ENCODE measurements at regions of chr12 and their contacts with region 1.

Region 1: DNA sequence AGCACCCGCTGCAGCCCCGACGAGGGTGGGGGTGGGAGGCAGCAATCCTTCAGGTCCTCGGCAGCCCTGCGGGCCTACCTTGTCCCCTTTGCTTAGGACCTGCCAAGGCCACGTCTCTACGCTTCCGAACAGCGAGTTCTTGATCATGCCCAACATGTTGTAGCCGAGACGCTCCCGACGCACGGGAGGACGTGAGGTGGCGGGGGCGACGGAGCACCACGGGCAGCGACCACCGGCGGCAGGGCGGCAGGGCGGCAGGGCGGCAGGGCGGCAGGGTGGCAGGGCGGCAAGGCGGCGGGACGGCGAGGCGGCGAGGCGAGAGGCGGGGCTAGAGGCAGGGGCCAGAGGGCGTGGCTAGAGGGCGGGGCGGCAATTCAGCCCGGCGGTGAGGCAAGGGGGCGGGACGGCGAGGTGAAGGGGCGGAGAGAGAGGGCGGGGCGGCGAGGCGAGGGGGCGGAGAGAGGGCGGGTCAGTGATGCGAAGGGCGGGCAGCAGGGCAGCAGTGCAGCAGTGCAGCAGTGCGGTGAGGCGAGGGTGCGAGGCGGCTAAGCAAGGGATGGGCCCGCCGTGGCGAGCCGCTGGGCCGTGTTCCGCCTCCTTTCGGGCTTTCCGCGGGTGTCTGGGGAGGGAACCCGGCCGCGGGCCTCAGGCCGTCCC is at the start of gene HEBP1:
- DNase-seq: peak; percentile 96 to 99 (median 98)
- ATAC-seq: peak; percentile 98 to 99 (median 98)
- H3K4me3 ChIP-seq: peak within 1 kb of the TSS; percentile 65 to 94 (median 87)
- H3K27ac ChIP-seq: peak within 1 kb of the TSS; percentile 28 to 98 (median 90)
- H3K4me1 ChIP-seq: peaks cover 0 to 64% (median 19%) of the 10 kb centered on the region in 12 donors
- H3K27me3 ChIP-seq: no peaks in the 10 kb centered on the region
- CTCF ChIP-seq: no peak
- POLR2A ChIP-seq: peak in 1 of 2 donors; percentile 94
- total RNA-seq, gene HEBP1: 26.3 to 65.3 (median 52.6) TPM

Region 2: DNA sequence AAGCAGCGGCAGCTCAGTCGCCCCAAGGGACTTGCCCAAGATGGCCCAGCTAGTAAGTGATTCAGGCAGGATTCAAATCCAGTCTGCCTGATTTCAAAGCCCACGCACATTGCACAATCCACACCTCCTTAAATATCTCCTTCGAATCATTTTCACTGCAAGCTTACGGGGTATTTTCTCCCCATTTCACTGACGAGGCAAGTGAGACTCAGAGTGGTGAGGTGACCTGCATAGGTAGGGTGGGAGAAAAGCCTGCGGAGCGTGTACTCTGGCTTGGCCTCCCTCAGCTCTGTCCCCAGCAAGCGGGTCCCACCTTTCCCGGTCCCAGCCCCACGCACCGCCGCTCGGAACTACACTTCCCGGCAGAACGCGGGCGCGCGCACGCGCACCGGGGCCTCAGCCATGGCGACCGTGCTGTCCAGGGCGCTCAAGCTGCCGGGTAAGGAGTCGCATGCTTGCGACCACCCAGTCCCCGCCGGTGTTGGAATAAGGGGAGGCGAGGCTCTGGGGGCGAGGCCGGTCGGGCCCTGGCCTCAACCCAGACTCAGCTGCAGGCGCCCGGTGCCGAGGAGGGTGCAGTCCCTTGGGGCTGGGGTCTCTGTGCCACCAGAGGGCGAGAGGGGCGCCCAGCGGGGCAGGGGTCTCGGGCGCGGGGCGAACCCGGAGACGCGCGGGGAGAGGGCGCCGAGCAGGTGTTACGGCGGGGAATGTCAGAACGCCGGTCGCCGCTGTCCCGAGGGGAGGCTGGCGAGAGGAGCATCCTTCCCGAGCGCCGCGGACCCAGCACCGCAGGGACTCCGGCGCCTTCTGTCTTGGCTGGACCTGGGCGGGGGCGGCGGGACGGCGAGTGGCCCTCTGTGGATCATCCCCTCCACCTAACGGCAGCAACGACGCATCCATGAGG is 44.2 kb after region 1 on chr12 and contains the start of gene FAM234B:
- intact Hi-C with region 1: loop called in 2 of 10 experiments (anchors 5 kb)
- DNase-seq: peak; percentile 80 to 92 (median 85)
- ATAC-seq: peak; percentile 86 to 99 (median 98)
- H3K4me3 ChIP-seq: peak within 1 kb of the TSS; percentile 87 to 100 (median 96)
- H3K27ac ChIP-seq: peak within 1 kb of the TSS in 10 of 12 donors; percentile 22 to 83 (median 68)
- H3K4me1 ChIP-seq: peaks cover 0 to 22% (median 8%) of the 10 kb centered on the region in 12 donors
- H3K27me3 ChIP-seq: no peaks in the 10 kb centered on the region
- CTCF ChIP-seq: peak in 6 of 12 donors; percentile 10 to 57 (median 24)
- POLR2A ChIP-seq: no peak
- total RNA-seq, gene FAM234B: 1.5 to 3.5 (median 2.6) TPM

Region 3: DNA sequence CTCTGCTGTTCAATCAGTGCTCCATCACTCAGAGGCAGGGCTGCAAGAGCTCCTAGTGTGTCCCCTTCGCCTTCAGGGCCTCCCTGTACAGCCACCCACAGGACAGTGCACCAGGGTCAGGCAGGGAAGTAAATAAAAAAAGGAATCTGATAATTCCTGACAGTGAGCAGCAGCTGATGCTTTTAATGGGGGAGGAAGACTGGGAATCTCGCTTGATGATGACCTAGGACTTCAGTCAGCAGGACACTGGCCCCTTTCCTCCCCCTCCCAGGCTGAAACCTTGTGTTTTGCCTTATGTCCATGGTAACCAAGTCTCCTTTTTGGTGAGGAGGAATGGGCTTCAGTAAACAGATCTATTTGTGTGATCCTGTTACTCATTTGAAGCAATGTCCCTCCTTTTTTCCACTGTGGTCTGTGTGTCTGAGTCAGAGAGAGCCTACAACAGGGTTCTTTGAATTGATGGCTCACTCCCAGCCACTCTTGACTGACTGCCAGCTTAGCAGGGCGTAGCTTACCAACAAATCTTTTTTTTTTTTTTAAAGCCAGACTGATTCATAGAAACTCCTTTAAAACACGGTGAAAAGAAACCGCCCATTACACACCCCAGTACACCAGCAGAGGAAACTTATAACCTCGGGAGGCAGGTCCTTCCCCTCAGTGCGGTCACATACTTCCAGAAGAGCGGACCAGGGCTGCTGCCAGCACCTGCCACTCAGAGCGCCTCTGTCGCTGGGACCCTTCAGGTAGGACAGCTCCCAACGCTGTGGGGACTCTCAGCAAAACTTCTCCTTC is 196.2 kb after region 1 on chr12 and contains the start of gene EMP1:
- intact Hi-C with region 1: loop called in 2 of 10 experiments (anchors 2 kb)
- DNase-seq: peak; percentile 87 to 96 (median 92)
- ATAC-seq: peak; percentile 83 to 92 (median 87)
- H3K4me3 ChIP-seq: peak within 1 kb of the TSS; percentile 54 to 85 (median 66)
- H3K27ac ChIP-seq: peak within 1 kb of the TSS; percentile 81 to 99 (median 90)
- H3K4me1 ChIP-seq: peaks cover 0 to 67% (median 32%) of the 10 kb centered on the region in 12 donors
- H3K27me3 ChIP-seq: no peaks in the 10 kb centered on the region
- CTCF ChIP-seq: no peak
- POLR2A ChIP-seq: peak in 1 of 2 donors; percentile 70
- total RNA-seq, gene EMP1: 67.9 to 281 (median 175) TPM

Region 4: GRCh38 chr12:13223179-13223859 is 223.2 kb after region 1 on chr12:
- intact Hi-C with region 1: loop called in 2 of 10 experiments (anchors 10 kb)
- DNase-seq: no peak
- ATAC-seq: no peak
- H3K4me3 ChIP-seq: no peak overlapping the region
- H3K27ac ChIP-seq: no peak overlapping the region
- H3K4me1 ChIP-seq: peaks cover 0 to 5% (median 0%) of the 10 kb centered on the region in 12 donors
- H3K27me3 ChIP-seq: no peaks in the 10 kb centered on the region
- CTCF ChIP-seq: no peak
- POLR2A ChIP-seq: no peak